ENCODE measurements at regions of chr13 and their contacts with region 1.

Region 1: GRCh38 chr13:91133941-91134802 is 213.3 kb upstream of the MIR17HG start:
- DNase-seq: peak; percentile 86
- H3K4me3 Mint-ChIP-seq: no peak overlapping the region
- H3K27ac Mint-ChIP-seq: no peak overlapping the region
- H3K4me1 Mint-ChIP-seq: no peaks in the 10 kb centered on the region
- H3K27me3 Mint-ChIP-seq: peaks cover 97% of the 10 kb centered on the region
- CTCF ChIP-seq: peak; percentile 71

Region 2: GRCh38 chr13:91185294-91185863 is 51.2 kb after region 1 on chr13:
- CTCF ChIA-PET with region 1: interaction called, 3 read pairs
- POLR2A ChIA-PET with region 1: no interaction called
- intact Hi-C with region 1: loop called (anchors 1 kb)
- DNase-seq: peak; percentile 28
- H3K4me3 Mint-ChIP-seq: no peak overlapping the region
- H3K27ac Mint-ChIP-seq: no peak overlapping the region
- H3K4me1 Mint-ChIP-seq: no peaks in the 10 kb centered on the region
- H3K27me3 Mint-ChIP-seq: peaks cover 94% of the 10 kb centered on the region
- CTCF ChIP-seq: peak; percentile 37

Region 3: DNA sequence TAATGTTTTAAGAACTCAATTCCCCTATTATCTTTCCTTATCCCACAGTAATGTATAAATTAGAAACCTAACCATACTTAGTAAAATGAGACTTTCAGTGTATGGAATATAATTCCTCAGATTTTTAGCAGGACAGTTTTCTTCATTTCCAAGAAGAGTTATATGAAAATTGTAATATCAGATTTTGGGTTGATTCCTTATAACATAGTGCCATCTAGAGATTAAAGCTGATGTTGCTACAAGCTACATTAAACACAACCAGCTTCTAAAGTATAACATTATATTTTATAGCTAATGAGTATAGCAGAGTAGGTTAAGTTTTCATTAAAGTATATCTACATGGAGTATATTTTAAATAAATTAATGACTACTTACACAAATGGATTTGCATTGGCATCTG is 113.6 kb after region 1 on chr13:
- CTCF ChIA-PET with region 1: interaction called, 13 read pairs
- POLR2A ChIA-PET with region 1: no interaction called
- intact Hi-C with region 1: loop called (anchors 1 kb)
- DNase-seq: peak; percentile 6
- H3K4me3 Mint-ChIP-seq: no peak overlapping the region
- H3K27ac Mint-ChIP-seq: no peak overlapping the region
- H3K4me1 Mint-ChIP-seq: no peaks in the 10 kb centered on the region
- H3K27me3 Mint-ChIP-seq: peaks cover 78% of the 10 kb centered on the region
- CTCF ChIP-seq: peak; percentile 19

Region 4: DNA sequence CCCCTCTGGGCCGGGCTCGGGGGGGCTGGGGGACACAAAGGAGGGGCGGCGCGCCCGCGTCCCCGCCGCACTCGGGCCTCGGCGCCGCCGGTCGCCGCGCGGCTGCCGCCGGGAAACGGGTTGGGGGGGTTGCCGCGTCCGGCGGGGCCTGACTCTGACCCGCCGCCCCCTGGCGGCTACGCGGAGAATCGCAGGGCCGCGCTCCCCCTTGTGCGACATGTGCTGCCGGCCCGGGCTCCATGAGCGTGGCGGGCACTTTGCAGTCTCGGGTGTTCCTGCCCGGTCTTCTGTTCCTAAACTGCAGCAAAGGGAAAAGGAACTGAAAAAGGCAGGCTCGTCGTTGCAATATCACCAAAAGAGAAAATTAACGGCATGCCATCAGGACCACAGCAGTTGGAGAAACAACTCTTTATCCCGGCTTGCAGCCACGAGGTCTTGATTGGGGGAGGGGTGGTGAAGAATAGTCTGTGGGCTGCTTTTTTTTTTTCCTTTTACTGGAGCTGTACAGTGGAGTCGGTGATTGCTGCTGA is 214.8 kb after region 1 on chr13:
- CTCF ChIA-PET with region 1: no interaction called
- POLR2A ChIA-PET with region 1: interaction called, 3 read pairs
- intact Hi-C with region 1: loop called (anchors 5 kb)
- DNase-seq: peak; percentile 88
- H3K4me3 Mint-ChIP-seq: peak overlapping the region; percentile 92
- H3K27ac Mint-ChIP-seq: peak overlapping the region; percentile 86
- H3K4me1 Mint-ChIP-seq: peaks cover 20% of the 10 kb centered on the region
- H3K27me3 Mint-ChIP-seq: peaks cover 7% of the 10 kb centered on the region
- CTCF ChIP-seq: peak; percentile 94